ENCODE measurements at regions of chr14 and their contacts with region 1.

Region 1: GRCh38 chr14:24734878-24735500 is 101.0 kb upstream of the GZMB start:
- DNase-seq: peak in 2 of 4 donors; percentile 78 to 89
- ATAC-seq: peak; percentile 73
- H3K4me3 ChIP-seq: no peak overlapping the region
- H3K27ac ChIP-seq: no peak overlapping the region
- H3K4me1 ChIP-seq: no peaks in the 10 kb centered on the region
- H3K27me3 ChIP-seq: no peaks in the 10 kb centered on the region
- CTCF ChIP-seq: peak; percentile 62 to 74

Region 2: GRCh38 chr14:24678801-24679247 is 56.2 kb before region 1 on chr14:
- intact Hi-C with region 1: no loop called
- DNase-seq: peak; percentile 65 to 91 (median 74)
- ATAC-seq: peak; percentile 100
- H3K4me3 ChIP-seq: peak overlapping the region; percentile 16 to 20
- H3K27ac ChIP-seq: no peak overlapping the region
- H3K4me1 ChIP-seq: peaks cover 0 to 19% of the 10 kb centered on the region in 2 donors
- H3K27me3 ChIP-seq: no peaks in the 10 kb centered on the region
- CTCF ChIP-seq: peak; percentile 94 to 98

Region 3: DNA sequence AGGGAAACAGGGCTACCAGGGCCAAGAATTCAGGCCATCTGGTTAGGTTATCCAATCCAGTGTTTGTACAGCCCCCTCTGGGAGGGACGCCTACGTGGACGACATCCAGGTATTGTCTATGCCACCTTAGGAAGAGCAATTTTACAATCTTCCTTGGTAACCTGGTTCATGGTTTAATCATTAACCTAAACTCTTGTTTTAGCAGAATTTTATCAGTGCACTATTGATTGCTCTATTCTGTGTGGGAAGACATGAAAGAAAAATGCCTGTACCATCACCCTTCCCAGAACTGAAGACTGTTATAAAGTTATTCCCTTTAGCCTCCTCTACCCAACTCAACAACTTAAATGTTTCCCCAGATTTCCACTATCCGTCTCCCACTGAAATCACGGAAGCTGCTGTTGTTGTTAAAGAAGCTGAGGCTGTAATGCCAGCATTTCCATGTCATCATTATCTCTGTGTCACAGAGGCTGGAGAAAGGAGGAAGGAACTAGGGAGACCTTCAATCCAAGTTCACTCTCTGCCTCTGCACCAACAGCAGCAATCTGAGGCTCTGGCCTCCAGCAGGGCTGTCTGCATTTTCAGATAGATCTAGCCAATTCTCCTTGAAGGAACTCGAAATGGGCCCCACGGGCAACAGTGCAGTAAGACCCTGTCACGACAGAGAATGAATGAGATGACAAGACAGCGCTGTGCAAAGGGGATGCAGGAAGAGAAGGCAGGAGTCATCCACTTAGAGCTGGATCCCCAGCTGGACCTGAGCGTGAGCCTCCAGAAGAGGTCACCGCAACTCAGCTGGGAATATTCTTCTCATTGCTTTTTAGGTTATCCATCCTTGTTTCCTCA is 82.4 kb after region 1 on chr14:
- intact Hi-C with region 1: no loop called
- DNase-seq: peak in 1 of 4 donors; percentile 50
- ATAC-seq: peak; percentile 39
- H3K4me3 ChIP-seq: no peak overlapping the region
- H3K27ac ChIP-seq: no peak overlapping the region
- H3K4me1 ChIP-seq: peaks cover 0 to 4% of the 10 kb centered on the region in 2 donors
- H3K27me3 ChIP-seq: no peaks in the 10 kb centered on the region
- CTCF ChIP-seq: peak in 1 of 2 donors; percentile 9

Region 4: DNA sequence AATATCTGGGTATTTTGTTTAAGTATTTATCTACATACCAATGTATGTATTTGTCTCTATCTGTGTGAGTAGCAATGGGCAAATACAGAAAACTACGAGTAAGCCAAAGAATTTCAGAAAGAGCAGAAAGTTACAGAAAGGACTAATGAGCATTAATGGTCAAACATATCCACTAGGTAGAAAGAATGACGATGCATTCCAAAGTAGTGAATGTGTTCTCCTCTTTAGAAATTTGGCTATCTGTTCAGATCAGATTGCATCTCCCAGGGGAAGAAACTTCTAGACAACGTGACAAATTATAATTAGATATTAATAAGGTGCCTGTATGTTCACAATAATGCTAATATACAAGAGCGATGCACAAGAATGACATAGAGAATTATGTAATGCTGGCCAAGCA is 93.5 kb after region 1 on chr14:
- intact Hi-C with region 1: no loop called
- DNase-seq: no peak
- ATAC-seq: no peak
- H3K4me3 ChIP-seq: no peak overlapping the region
- H3K27ac ChIP-seq: no peak overlapping the region
- H3K4me1 ChIP-seq: no peaks in the 10 kb centered on the region
- H3K27me3 ChIP-seq: no peaks in the 10 kb centered on the region
- CTCF ChIP-seq: no peak

Region 5: DNA sequence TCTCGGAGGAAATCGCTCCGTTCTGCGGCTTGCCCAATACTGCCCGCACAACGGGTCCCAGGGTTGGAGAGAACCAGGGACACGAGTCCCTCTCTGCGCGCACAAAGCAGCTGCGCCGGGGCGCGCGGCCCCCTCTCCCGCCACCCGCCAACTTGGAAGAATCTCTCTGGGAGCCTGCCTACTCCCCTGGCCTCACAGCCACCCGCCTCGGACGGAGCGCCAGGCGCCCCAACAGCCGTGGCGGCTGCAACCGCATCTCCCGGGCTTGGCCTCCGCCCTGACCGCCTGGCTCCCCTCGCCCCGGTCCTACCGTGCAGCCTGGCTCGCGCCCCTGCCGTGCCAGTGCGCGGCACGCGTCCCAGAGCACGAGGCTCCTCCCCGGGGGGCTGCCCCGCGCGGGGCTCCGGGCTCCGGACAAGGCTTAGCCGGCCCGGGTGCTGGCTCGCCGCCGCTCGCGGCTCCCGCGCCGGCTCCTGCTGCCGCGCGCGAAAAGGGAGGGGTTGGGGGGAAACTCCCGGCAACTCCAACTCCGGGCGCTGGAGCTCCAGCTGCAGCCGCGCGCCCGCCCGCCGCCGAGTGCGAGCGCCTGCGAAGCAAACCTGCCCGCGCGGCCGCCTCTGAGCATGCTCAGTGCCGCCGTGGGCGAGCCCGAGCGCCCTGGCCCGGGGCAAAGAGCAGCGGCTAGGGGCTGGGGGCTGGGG is 314.7 kb after region 1 on chr14 and contains the start of gene STXBP6:
- intact Hi-C with region 1: loop called in 1 of 2 experiments (anchors 10 kb)
- DNase-seq: peak; percentile 52 to 88 (median 79)
- ATAC-seq: peak; percentile 92
- H3K4me3 ChIP-seq: peak within 1 kb of the TSS; percentile 49 to 50
- H3K27ac ChIP-seq: peak within 1 kb of the TSS; percentile 55 to 57
- H3K4me1 ChIP-seq: peaks cover 0 to 26% of the 10 kb centered on the region in 2 donors
- H3K27me3 ChIP-seq: peaks cover 33 to 57% of the 10 kb centered on the region in 2 donors
- CTCF ChIP-seq: no peak
- polyA plus RNA-seq, gene STXBP6: 42.9 to 54.1 (median 49.6) TPM

Region 6: DNA sequence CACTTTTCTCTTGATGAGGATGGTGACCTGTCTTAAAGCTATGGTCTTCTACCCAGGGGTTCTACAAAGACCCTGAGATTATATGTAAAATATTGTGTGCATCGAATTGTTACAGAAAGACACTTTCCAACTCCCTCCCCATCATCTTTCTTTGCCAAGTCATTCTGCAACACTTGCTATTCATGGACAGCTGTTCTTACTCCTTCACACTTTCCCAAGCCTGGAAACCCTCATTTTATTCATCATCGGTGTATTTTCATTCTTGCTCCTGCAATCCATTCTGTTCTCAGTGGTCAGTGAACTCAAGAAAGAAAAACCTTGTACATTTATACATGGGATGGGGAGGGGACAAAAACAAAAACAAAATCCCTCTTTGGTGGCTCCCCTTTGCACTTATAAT is 405.4 kb after region 1 on chr14:
- intact Hi-C with region 1: loop called in 1 of 2 experiments (anchors 10 kb)
- DNase-seq: peak in 2 of 4 donors; percentile 84 to 86
- ATAC-seq: no peak
- H3K4me3 ChIP-seq: no peak overlapping the region
- H3K27ac ChIP-seq: no peak overlapping the region
- H3K4me1 ChIP-seq: no peaks in the 10 kb centered on the region
- H3K27me3 ChIP-seq: no peaks in the 10 kb centered on the region
- CTCF ChIP-seq: no peak